ENCODE measurements at regions of chr12 and their contacts with region 1.

Region 1: GRCh38 chr12:54324617-54325441 is at the start of gene COPZ1:
- DNase-seq: peak; percentile 99 to 100 (median 100)
- H3K4me3 ChIP-seq: peak within 1 kb of the TSS; percentile 38 to 99 (median 91)
- H3K27ac ChIP-seq: peak within 1 kb of the TSS; percentile 83 to 94
- H3K4me1 ChIP-seq: peaks cover 6 to 23% (median 18%) of the 10 kb centered on the region in 4 experiments
- H3K27me3 ChIP-seq: no peaks in the 10 kb centered on the region

Region 2: DNA sequence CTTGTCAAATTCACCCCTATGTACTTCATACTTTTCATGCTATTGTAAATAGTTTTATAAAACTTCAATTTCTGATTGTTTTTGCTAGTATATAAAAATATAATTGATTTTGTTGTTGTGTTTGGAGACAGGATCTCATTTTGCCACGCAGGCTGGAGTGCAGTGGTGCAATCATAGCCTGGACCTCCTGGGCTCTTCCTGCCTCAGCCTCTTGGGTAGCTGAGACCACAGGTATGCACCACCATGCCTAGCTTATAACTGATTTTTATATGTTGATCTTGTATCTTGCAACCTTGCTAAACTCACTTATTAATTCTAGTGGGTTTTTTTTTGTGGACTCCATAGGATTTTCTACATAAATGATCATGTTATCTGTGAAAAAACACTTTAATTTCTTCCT is 672.5 kb before region 1 on chr12:
- CTCF ChIA-PET with region 1: no interaction called
- POLR2A ChIA-PET with region 1: no interaction called
- DNase-seq: no peak
- H3K4me3 ChIP-seq: no peak overlapping the region
- H3K27ac ChIP-seq: no peak overlapping the region
- H3K4me1 ChIP-seq: no peaks in the 10 kb centered on the region
- H3K27me3 ChIP-seq: no peaks in the 10 kb centered on the region

Region 3: GRCh38 chr12:54279866-54280467 is 44.9 kb before region 1 on chr12 and contains the start of gene CBX5:
- CTCF ChIA-PET with region 1: interaction called, 14 read pairs
- POLR2A ChIA-PET with region 1: interaction called, 11 read pairs
- DNase-seq: peak; percentile 98 to 99 (median 99)
- H3K4me3 ChIP-seq: peak within 1 kb of the TSS; percentile 71 to 99 (median 96)
- H3K27ac ChIP-seq: peak within 1 kb of the TSS; percentile 99
- H3K4me1 ChIP-seq: peaks cover 39 to 70% (median 46%) of the 10 kb centered on the region in 4 experiments
- H3K27me3 ChIP-seq: no peaks in the 10 kb centered on the region

Region 4: DNA sequence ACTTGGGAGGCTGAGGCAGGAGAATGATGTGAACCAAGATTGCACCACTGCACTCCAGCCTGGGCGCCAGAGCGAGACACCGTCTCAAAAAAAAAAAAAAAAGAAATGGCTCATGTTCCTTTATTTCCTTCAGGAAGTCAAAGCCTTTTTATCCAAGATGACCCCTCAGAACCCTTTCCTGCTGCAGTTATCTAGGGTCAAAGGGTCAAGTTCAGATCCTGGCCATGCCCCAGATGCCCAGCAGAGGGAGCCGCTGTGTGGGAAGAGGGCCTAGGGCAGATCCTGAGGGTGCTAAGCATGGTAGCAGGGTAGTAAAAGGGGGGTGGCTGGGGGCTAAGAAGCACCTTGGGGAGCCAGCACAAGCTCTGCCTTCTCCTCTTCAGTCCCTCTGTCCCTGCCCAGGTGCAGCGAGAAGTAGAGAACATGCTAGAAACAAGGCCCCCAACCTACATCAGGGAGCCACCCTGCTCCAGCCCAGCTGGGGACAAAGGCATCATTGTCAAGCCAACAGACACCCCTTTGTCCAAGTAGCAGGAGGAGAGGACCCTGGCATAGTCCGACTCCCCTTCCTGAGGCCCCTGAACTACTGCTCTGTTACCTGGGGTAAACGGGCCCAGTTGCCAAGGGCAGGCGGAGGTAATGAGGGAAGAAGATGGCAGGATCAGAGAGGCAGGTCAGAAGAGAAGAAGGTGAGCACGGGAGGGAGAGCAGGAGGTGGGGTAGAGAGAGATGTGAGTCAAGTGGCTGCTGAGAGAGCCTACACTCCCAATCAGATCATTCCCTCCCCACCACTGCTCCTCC is 30.5 kb before region 1 on chr12:
- CTCF ChIA-PET with region 1: interaction called, 890 read pairs
- POLR2A ChIA-PET with region 1: interaction called, 17 read pairs
- DNase-seq: peak; percentile 64 to 76 (median 73)
- H3K4me3 ChIP-seq: peak overlapping the region in 5 of 7 experiments; percentile 40 to 86 (median 59)
- H3K27ac ChIP-seq: peak overlapping the region; percentile 22 to 95
- H3K4me1 ChIP-seq: peaks cover 24 to 93% (median 86%) of the 10 kb centered on the region in 4 experiments
- H3K27me3 ChIP-seq: no peaks in the 10 kb centered on the region

Region 5: GRCh38 chr12:54306925-54307741 is 17.7 kb before region 1 on chr12:
- CTCF ChIA-PET with region 1: interaction called, 890 read pairs
- POLR2A ChIA-PET with region 1: interaction called, 10 read pairs
- DNase-seq: peak; percentile 90 to 95 (median 94)
- H3K4me3 ChIP-seq: peak overlapping the region in 3 of 7 experiments; percentile 33 to 50 (median 37)
- H3K27ac ChIP-seq: peak overlapping the region; percentile 30 to 60
- H3K4me1 ChIP-seq: peaks cover 33 to 74% (median 64%) of the 10 kb centered on the region in 4 experiments
- H3K27me3 ChIP-seq: no peaks in the 10 kb centered on the region